ENCODE measurements at regions of chr1 and their contacts with region 1.

Region 1: GRCh38 chr1:93701619-93702018 is 20.0 kb upstream of the BCAR3 start:
- DNase-seq: peak in 1 of 2 donors; percentile 88
- H3K4me3 ChIP-seq: no peak overlapping the region
- H3K27ac ChIP-seq: peak overlapping the region; percentile 10
- H3K4me1 ChIP-seq: peaks cover 24% of the 10 kb centered on the region
- H3K27me3 ChIP-seq: no peaks in the 10 kb centered on the region
- CTCF ChIP-seq: no peak
- POLR2A ChIP-seq: no peak

Region 2: DNA sequence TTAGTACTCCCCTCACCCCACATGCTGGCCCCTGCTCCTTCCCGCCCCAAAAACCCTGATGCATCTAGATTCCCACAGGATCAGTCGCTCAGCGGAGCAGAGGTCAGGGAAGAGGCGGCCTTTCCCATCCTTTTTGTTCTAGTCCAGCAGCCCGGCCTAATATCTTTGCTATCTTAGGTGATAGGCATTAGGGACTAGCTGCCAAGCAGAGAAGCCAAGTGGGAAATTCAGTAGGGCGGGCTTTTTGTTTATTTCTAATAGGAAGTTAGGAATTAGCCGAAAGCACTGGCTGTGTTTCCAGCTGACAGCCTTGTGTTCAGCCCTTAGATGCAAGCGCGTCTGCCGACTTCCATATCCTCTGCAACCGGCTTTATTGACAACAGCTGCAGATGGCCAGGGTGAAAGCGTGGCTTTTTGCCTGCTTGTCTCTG is 39.0 kb after region 1 on chr1:
- intact Hi-C with region 1: loop called (anchors 5 kb)
- DNase-seq: no peak
- H3K4me3 ChIP-seq: no peak overlapping the region
- H3K27ac ChIP-seq: peak overlapping the region; percentile 11
- H3K4me1 ChIP-seq: peaks cover 6% of the 10 kb centered on the region
- H3K27me3 ChIP-seq: no peaks in the 10 kb centered on the region
- CTCF ChIP-seq: no peak
- POLR2A ChIP-seq: no peak